ENCODE measurements at regions of chr11 and their contacts with region 1.

Region 1: DNA sequence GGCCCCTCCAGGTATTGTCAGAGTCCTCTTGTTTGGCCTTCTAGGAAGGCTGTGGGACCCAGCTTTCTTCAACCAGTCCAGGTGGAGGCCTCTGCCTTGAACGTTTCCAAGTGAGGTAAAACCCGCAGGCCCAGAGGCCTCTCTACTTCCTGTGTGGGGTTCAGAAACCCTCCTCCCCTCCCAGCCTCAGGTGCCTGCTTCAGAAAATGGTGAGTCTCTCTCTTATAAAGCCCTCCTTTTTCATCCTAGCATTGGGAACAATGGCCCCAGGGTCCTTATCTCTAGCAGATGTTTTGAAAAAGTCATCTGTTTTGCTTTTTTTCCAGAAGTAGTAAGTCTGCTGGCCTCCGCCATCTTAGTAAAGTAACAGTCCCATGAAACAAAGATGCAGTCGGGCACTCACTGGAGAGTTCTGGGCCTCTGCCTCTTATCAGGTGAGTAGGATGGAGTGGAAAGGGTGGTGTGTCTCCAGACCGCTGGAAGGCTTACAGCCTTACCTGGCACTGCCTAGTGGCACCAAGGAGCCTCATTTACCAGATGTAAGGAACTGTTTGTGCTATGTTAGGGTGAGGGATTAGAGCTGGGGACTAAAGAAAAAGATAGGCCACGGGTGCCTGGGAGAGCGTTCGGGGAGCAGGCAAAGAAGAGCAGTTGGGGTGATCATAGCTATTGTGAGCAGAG is at the start of gene CD3E:
- DNase-seq: peak; percentile 84
- H3K4me3 Mint-ChIP-seq: peak within 1 kb of the TSS; percentile 100
- H3K27ac Mint-ChIP-seq: peak within 1 kb of the TSS; percentile 100
- H3K4me1 Mint-ChIP-seq: peaks cover 66% of the 10 kb centered on the region
- H3K27me3 Mint-ChIP-seq: no peaks in the 10 kb centered on the region
- total RNA-seq, gene CD3E: 476 to 488 TPM

Region 2: DNA sequence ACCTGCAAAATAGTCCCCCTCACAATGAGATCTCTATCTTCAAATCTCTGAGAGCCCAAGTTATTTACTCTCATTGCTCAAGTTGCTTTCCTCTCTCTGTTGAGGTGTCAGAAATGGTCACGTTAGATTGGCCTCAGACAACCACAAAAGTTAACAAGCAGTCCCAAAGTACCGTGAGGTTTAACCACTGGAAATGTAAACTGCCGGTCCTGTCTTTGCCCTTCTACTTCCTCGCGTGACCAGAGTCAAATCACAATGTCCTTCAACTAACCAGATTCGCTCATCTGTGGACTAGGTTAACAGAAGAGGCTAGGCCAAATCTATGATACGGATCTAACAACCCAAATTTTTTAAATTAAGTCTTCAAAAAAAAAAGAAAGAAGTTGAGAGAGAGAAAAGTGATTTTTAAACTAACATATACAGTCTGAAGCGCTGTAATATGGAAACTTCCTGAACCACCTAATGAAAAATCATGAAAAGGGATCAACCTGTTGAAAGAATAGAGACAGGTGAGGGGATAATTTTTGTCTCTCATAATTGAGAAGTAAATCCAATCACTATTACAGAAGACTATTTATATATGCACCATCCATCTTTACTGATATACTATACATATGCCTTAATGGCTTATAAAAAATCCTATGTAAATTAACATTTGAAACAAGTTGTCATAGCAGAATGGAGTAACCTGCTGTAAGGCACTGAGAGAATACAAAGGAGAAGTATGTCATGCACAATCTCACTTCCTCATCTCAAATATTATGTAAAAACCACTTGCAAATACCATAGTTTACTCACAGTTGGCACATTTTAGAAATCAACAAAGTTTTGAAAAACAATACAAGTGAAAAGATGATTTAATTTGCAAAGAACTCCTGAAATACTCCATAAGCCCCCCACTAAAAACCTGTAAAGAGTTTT is 76.6 kb before region 1 on chr11:
- CTCF ChIA-PET with region 1: no interaction called
- POLR2A ChIA-PET with region 1: interaction called, 10 read pairs
- intact Hi-C with region 1: no loop called
- DNase-seq: peak; percentile 43
- H3K4me3 Mint-ChIP-seq: peak overlapping the region; percentile 45
- H3K27ac Mint-ChIP-seq: no peak overlapping the region
- H3K4me1 Mint-ChIP-seq: peaks cover 47% of the 10 kb centered on the region
- H3K27me3 Mint-ChIP-seq: no peaks in the 10 kb centered on the region

Region 3: GRCh38 chr11:118281284-118281683 is 23.4 kb before region 1 on chr11:
- CTCF ChIA-PET with region 1: no interaction called
- POLR2A ChIA-PET with region 1: no interaction called
- intact Hi-C with region 1: no loop called
- DNase-seq: peak; percentile 57
- H3K4me3 Mint-ChIP-seq: no peak overlapping the region
- H3K27ac Mint-ChIP-seq: peak overlapping the region; percentile 61
- H3K4me1 Mint-ChIP-seq: peaks cover 44% of the 10 kb centered on the region
- H3K27me3 Mint-ChIP-seq: no peaks in the 10 kb centered on the region

Region 4: GRCh38 chr11:118338637-118339061 is 33.9 kb after region 1 on chr11:
- CTCF ChIA-PET with region 1: interaction called, 21 read pairs
- POLR2A ChIA-PET with region 1: interaction called, 3 read pairs
- intact Hi-C with region 1: loop called (anchors 1 kb)
- DNase-seq: peak; percentile 95
- H3K4me3 Mint-ChIP-seq: peak overlapping the region; percentile 82
- H3K27ac Mint-ChIP-seq: peak overlapping the region; percentile 98
- H3K4me1 Mint-ChIP-seq: peaks cover 48% of the 10 kb centered on the region
- H3K27me3 Mint-ChIP-seq: no peaks in the 10 kb centered on the region

Region 5: GRCh38 chr11:118353084-118353710 is 48.5 kb after region 1 on chr11:
- CTCF ChIA-PET with region 1: interaction called, 17 read pairs
- POLR2A ChIA-PET with region 1: interaction called, 3 read pairs
- intact Hi-C with region 1: loop called (anchors 1 kb)
- DNase-seq: no peak
- H3K4me3 Mint-ChIP-seq: no peak overlapping the region
- H3K27ac Mint-ChIP-seq: peak overlapping the region; percentile 71
- H3K4me1 Mint-ChIP-seq: peaks cover 23% of the 10 kb centered on the region
- H3K27me3 Mint-ChIP-seq: no peaks in the 10 kb centered on the region

Region 6: GRCh38 chr11:118415739-118416284 is 111.1 kb after region 1 on chr11:
- CTCF ChIA-PET with region 1: no interaction called
- POLR2A ChIA-PET with region 1: no interaction called
- intact Hi-C with region 1: no loop called
- DNase-seq: peak; percentile 49
- H3K4me3 Mint-ChIP-seq: no peak overlapping the region
- H3K27ac Mint-ChIP-seq: no peak overlapping the region
- H3K4me1 Mint-ChIP-seq: no peaks in the 10 kb centered on the region
- H3K27me3 Mint-ChIP-seq: no peaks in the 10 kb centered on the region

Region 7: GRCh38 chr11:118997627-118998387 is 693.1 kb after region 1 on chr11 and contains the start of gene CENATAC:
- CTCF ChIA-PET with region 1: no interaction called
- POLR2A ChIA-PET with region 1: no interaction called
- intact Hi-C with region 1: loop called (anchors 1 kb)
- DNase-seq: peak; percentile 98
- H3K4me3 Mint-ChIP-seq: peak within 1 kb of the TSS; percentile 88
- H3K27ac Mint-ChIP-seq: peak within 1 kb of the TSS; percentile 94
- H3K4me1 Mint-ChIP-seq: peaks cover 28% of the 10 kb centered on the region
- H3K27me3 Mint-ChIP-seq: no peaks in the 10 kb centered on the region
- total RNA-seq, gene CENATAC: 21.4 to 22.3 TPM

Measured in activated CD4-positive, alpha-beta memory T cell treated with anti-CD3 and anti-CD28 coated beads for 36 hours (primary cell).